Heart right ventricle (tissue), 16 donors: ENCODE measurements at regions of chr3 and their contacts with region 1.

Region 1: DNA sequence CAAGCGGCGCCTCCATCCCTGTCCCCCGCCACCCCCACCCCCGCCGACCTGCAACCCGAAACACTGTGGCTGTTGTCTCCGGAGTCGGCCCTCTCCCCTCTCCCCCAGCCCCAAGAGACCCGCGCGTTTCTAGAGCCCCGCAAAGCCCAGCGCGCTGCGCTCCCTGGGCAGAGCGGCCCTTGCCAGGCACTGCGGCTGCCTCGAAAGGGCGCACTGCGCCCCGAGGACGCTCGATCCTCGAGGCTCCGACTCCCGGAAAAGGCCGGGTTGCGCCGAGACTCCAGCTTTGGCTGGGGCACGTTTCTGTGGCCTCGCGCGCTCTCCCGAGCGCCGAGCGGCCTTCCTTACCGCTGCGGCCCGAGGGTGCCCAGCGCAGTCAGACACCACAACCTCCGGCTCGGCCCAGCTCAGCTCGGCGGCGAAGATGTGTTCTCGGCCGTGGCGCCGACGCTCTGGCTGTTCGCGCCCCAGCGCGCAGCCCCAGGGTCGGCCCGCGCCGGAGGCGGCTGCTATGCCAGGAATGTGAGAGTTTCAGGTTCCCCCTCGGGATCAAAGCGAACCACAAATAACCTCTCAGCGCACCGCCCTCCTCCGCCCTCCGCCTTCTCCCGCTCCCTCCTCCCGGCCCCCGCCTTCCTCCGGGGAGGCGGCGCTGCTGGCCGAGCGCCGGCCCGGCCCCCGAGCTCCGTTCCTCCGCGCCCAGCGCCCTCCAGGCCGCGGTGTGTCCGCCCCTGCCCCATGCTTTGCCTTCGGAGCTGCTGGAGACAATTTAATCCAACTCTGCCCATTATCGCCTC is at the start of gene AMOTL2:
- DNase-seq: peak; percentile 89 to 92
- ATAC-seq: peak; percentile 75 to 90 (median 80)
- H3K4me3 ChIP-seq: peak within 1 kb of the TSS; percentile 57 to 94 (median 82)
- H3K27ac ChIP-seq: peak within 1 kb of the TSS; percentile 95 to 100 (median 100)
- H3K4me1 ChIP-seq: peaks cover 18 to 71% (median 55%) of the 10 kb centered on the region in 9 donors
- H3K27me3 ChIP-seq: peaks cover 0 to 24% (median 0%) of the 10 kb centered on the region in 7 donors
- CTCF ChIP-seq: no peak
- total RNA-seq, gene AMOTL2: 27.8 to 96.6 (median 57.8) TPM

Region 2: GRCh38 chr3:134197681-134198261 is 176.4 kb before region 1 on chr3:
- intact Hi-C with region 1: loop called in 1 of 10 experiments (anchors 10 kb)
- DNase-seq: peak in 1 of 2 donors; percentile 35
- ATAC-seq: peak in 7 of 8 donors; percentile 51 to 88 (median 71)
- H3K4me3 ChIP-seq: no peak overlapping the region
- H3K27ac ChIP-seq: no peak overlapping the region
- H3K4me1 ChIP-seq: peaks cover 0 to 7% (median 0%) of the 10 kb centered on the region in 9 donors
- H3K27me3 ChIP-seq: no peaks in the 10 kb centered on the region
- CTCF ChIP-seq: peak; percentile 45 to 81 (median 74)

Region 3: GRCh38 chr3:134239538-134239937 is 134.7 kb before region 1 on chr3:
- intact Hi-C with region 1: loop called in 1 of 10 experiments (anchors 5 kb)
- DNase-seq: no peak
- ATAC-seq: no peak
- H3K4me3 ChIP-seq: no peak overlapping the region
- H3K27ac ChIP-seq: peak overlapping the region in 2 of 10 donors; percentile 14 to 46
- H3K4me1 ChIP-seq: peaks cover 6 to 86% (median 70%) of the 10 kb centered on the region in 9 donors
- H3K27me3 ChIP-seq: no peaks in the 10 kb centered on the region
- CTCF ChIP-seq: no peak

Region 4: GRCh38 chr3:134315286-134316106 is 58.7 kb before region 1 on chr3:
- intact Hi-C with region 1: loop called in 7 of 10 experiments (anchors 1 to 5 kb)
- DNase-seq: peak; percentile 75
- ATAC-seq: peak; percentile 59 to 78 (median 68)
- H3K4me3 ChIP-seq: no peak overlapping the region
- H3K27ac ChIP-seq: peak overlapping the region; percentile 85 to 97 (median 92)
- H3K4me1 ChIP-seq: peaks cover 11 to 55% (median 47%) of the 10 kb centered on the region in 9 donors
- H3K27me3 ChIP-seq: peaks cover 0 to 28% (median 0%) of the 10 kb centered on the region in 7 donors
- CTCF ChIP-seq: no peak

Region 5: GRCh38 chr3:134326760-134327593 is 47.2 kb before region 1 on chr3:
- intact Hi-C with region 1: no loop called
- DNase-seq: no peak
- ATAC-seq: peak; percentile 60 to 93 (median 68)
- H3K4me3 ChIP-seq: no peak overlapping the region
- H3K27ac ChIP-seq: peak overlapping the region in 9 of 10 donors; percentile 17 to 73 (median 38)
- H3K4me1 ChIP-seq: peaks cover 20 to 49% (median 42%) of the 10 kb centered on the region in 9 donors
- H3K27me3 ChIP-seq: no peaks in the 10 kb centered on the region
- CTCF ChIP-seq: no peak

Region 6: DNA sequence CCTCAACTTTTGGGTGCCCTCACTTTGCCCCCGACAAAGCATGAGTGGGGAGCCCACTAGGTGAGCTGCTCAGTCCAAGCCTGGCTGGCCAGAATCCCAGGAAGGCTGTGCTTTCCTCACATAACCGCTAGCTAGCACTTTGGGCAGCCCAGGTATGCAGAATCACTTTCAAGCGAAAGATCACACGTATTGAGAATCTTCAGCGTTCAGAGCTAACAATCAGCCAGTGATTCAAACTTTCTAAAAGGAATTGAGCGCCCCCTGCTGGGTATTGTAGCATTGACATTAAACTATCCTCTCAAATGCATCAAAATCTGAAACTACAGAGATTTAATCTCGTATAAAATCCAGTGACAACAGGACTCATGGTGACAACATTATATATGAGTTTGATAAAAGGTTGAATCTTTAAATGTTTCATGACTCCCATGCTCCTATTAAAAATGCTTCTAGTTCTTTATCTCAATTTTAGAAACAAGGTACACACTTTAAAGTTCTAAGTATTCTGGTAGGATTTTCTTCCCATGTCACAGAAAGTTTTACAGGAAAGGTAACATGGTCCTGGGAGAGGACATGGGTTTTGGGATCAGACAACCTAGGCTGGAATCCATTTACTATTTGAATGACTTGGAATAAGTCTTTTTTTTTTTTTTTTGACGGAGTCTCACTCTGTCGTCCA is 99.8 kb after region 1 on chr3:
- intact Hi-C with region 1: loop called in 7 of 10 experiments (anchors 5 kb)
- DNase-seq: peak in 1 of 2 donors; percentile 86
- ATAC-seq: peak in 6 of 8 donors; percentile 23 to 66 (median 58)
- H3K4me3 ChIP-seq: no peak overlapping the region
- H3K27ac ChIP-seq: no peak overlapping the region
- H3K4me1 ChIP-seq: peaks cover 0 to 37% (median 20%) of the 10 kb centered on the region in 9 donors
- H3K27me3 ChIP-seq: no peaks in the 10 kb centered on the region
- CTCF ChIP-seq: peak; percentile 77 to 90 (median 82)

Region 7: GRCh38 chr3:134552784-134553183 is 178.6 kb after region 1 on chr3:
- intact Hi-C with region 1: no loop called
- DNase-seq: no peak
- ATAC-seq: no peak
- H3K4me3 ChIP-seq: no peak overlapping the region
- H3K27ac ChIP-seq: no peak overlapping the region
- H3K4me1 ChIP-seq: no peaks in the 10 kb centered on the region
- H3K27me3 ChIP-seq: no peaks in the 10 kb centered on the region
- CTCF ChIP-seq: no peak